ENCODE measurements at regions of chr20 and their contacts with region 1.

Region 1: GRCh38 chr20:3786665-3787323 is at the start of gene CENPB:
- DNase-seq: peak; percentile 83 to 98 (median 86)

Region 2: DNA sequence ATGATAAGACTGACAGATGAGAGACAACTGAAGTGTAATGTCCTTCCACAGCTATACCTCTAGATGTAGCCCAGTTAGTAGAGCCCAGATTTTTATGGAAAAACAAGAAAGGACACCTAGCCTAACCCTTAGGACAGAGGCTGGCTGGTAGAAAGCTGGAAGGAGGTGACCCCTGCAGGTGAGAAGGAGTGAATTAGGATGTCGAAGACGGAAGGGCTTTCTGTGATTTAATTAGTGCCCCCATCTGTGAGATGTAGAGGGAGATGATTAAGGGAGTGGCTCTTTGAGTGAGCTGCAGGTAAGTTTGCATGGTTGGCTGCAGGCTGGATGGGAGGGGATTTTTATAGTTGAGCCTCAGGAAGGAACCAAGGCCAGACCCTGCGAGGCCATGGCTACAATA is 206.4 kb before region 1 on chr20:
- intact Hi-C with region 1: no loop called
- DNase-seq: no peak

Region 3: DNA sequence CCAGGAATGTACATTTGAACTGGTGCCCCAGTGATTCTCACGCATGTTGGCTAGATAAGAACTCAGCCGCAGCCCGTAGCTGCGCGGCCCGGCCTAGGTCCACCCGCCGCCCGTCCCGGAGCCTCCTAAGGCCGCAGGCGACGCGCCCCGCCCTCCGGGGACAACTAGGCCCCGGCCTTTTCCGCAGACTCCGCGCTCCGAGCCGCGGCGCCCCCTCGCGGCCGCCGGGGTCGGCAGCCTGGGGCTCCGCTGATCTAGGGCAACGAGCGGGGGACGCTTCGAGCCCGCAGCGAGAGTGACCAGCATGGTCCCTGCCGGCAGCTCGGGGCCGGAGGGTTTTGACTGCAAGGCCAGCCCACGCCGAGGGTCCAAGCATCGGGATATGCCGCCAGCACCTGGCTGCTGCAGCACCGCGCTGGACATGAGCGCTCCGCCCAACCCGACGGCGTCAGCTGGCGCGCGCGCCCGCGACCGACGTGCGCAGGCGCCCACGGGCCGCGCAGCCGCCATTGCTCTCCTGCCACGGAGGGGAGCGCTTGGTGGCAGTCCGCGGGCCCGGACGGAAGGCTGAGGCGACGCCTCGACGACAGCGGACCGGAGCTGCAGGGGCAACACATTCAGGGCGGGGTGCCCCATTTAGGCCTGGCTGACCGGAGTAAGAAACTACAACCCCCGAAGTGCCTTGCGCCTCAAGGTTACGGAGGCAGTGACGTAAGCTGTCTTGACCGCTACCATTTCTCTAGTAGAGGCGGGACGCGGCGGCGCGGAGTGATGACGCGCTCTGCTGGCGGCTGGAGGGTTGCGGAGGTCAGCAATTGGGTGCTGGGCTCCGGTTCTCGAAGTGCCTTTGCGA is 33.5 kb after region 1 on chr20 and contains the start of gene AP5S1:
- intact Hi-C with region 1: loop called (anchors 1 kb)
- DNase-seq: peak; percentile 95 to 99 (median 97)

Region 4: DNA sequence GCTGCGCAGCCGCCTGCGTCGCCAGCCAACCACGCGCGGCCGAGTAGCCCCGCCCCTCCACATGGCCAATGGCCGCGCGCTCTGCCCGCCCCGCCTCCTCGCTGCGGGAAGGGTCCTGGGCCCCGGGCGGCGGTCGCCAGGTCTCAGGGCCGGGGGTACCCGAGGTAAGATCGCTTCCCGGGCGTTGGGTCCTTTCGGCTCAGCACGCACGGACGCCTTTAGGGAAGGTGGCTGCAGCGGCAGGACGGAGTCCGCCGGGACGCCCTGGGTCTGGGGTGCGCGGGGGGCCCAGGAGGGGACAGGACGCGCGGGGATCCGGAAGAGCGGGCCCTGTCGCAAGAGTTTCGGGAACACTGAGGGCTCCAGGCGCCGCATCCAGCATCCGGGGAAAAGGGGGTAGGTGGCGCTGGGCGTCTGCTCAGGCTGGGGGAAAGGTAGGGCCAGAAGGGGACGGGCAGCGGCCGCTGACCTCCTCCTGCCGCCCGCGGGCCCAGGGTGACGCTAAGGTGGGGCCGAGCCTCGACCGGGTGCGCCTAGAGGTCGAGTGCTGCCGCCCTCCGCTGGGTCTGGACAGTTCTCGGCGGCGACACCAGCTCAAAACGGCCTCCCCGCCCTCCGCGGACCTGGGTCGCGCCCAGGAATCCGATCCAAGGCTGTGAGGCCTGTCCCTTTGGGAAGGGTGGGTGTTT is 60.1 kb after region 1 on chr20 and contains the start of gene MAVS:
- intact Hi-C with region 1: loop called (anchors 2 kb)
- DNase-seq: peak; percentile 82 to 99 (median 89)

Measured in posterior cingulate gyrus (tissue), 11 donors.